AG04449 (cell line): ENCODE measurements at regions of chr14 and their contacts with region 1.

Region 1: DNA sequence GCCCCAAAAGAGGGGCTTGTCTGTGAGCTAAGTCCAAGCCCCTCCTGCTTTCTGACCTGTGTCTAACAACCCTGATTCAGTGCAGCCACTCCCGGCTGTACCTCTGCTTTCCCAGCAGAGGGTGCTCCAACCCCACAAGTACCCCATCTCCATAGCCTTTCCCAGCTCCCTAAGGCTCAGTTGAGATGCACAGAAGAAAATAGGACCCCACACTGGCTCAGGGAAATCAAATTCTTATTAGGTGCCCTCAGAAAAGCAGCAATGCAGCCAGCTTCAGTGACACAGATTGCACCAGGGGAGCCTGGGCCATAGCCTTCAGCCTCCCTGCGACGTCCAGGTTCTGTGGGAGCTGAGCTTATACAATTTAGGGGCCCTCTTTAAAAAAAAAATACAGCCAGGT is 49.9 kb downstream of the LRRC74A start:
- DNase-seq: peak; percentile 24
- H3K4me3 ChIP-seq: no peak overlapping the region
- CTCF ChIP-seq: peak; percentile 92

Region 2: GRCh38 chr14:76509311-76509710 is 366.8 kb before region 1 on chr14:
- CTCF ChIA-PET with region 1: no interaction called
- POLR2A ChIA-PET with region 1: no interaction called
- DNase-seq: no peak
- H3K4me3 ChIP-seq: no peak overlapping the region
- CTCF ChIP-seq: no peak

Region 3: DNA sequence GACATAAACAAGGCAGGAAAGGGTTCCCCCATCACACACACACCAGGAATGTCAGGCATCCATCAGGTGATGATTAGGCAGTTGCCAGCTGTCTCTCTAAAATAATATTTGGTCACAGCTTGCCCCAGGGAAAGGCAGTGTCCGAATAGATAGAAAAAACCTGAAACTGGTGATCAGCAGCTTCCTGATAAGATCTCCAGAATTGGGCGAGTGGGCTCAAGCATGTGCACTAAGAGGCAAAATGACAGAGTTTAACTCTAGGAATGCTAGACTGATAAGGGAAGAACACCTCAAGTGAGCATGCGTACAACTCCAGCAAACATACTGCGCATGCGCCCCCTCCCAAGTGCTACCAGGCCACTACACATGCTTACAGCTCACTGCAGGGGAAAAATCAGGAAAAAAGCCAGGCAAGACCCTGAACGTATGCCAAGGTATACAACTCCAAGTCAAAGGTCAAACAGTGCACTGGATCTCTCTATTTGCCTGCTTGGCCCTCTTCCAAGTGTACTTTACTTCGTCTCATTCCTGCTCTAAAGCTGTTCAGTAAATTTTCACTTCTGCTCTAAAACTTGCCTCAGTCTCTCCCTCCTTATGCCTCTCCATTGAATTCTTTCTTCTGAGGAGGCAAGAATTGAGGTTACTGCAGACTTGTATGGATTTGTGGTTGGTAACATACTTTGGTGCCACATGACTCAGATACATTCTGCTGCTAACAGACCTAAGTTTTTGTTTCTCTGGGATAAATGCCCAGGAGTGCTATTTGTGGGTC is 188.3 kb before region 1 on chr14:
- CTCF ChIA-PET with region 1: no interaction called
- POLR2A ChIA-PET with region 1: no interaction called
- DNase-seq: no peak
- H3K4me3 ChIP-seq: no peak overlapping the region
- CTCF ChIP-seq: no peak

Region 4: GRCh38 chr14:76863724-76864407 is 12.2 kb before region 1 on chr14:
- CTCF ChIA-PET with region 1: interaction called, 37 read pairs
- POLR2A ChIA-PET with region 1: no interaction called
- DNase-seq: no peak
- H3K4me3 ChIP-seq: no peak overlapping the region
- CTCF ChIP-seq: no peak

Region 5: GRCh38 chr14:76904740-76905438 is 28.8 kb after region 1 on chr14:
- CTCF ChIA-PET with region 1: interaction called, 217 read pairs
- POLR2A ChIA-PET with region 1: no interaction called
- DNase-seq: peak; percentile 92
- H3K4me3 ChIP-seq: no peak overlapping the region; the same call in none of the 2 replicates
- CTCF ChIP-seq: no peak

Region 6: GRCh38 chr14:77040059-77040740 is 164.1 kb after region 1 on chr14:
- CTCF ChIA-PET with region 1: interaction called, 47 read pairs
- POLR2A ChIA-PET with region 1: no interaction called
- DNase-seq: peak; percentile 90
- H3K4me3 ChIP-seq: peak overlapping the region; percentile 42
- CTCF ChIP-seq: no peak

Region 7: GRCh38 chr14:77059276-77059915 is 183.3 kb after region 1 on chr14:
- CTCF ChIA-PET with region 1: interaction called, 1,065 read pairs
- POLR2A ChIA-PET with region 1: no interaction called
- DNase-seq: no peak
- H3K4me3 ChIP-seq: no peak overlapping the region
- CTCF ChIP-seq: peak; percentile 44

Region 8: GRCh38 chr14:77097700-77098528 is 221.8 kb after region 1 on chr14 and contains the start of gene CIPC:
- CTCF ChIA-PET with region 1: interaction called, 442 read pairs
- POLR2A ChIA-PET with region 1: no interaction called
- DNase-seq: peak; percentile 88
- H3K4me3 ChIP-seq: peak within 1 kb of the TSS; percentile 100
- CTCF ChIP-seq: no peak

Region 9: GRCh38 chr14:77151918-77152588 is 276.0 kb after region 1 on chr14:
- CTCF ChIA-PET with region 1: interaction called, 77 read pairs
- POLR2A ChIA-PET with region 1: no interaction called
- DNase-seq: no peak
- H3K4me3 ChIP-seq: no peak overlapping the region
- CTCF ChIP-seq: no peak